Heart right ventricle (tissue), 16 donors: ENCODE measurements at regions of chr15 and their contacts with region 1.

Region 1: GRCh38 chr15:35289024-35289617 is 204.0 kb upstream of the NANOGP8 start:
- DNase-seq: peak in 1 of 2 donors; percentile 20
- ATAC-seq: peak in 4 of 8 donors; percentile 38 to 73 (median 65)
- H3K4me3 ChIP-seq: no peak overlapping the region
- H3K27ac ChIP-seq: no peak overlapping the region
- H3K4me1 ChIP-seq: peaks cover 0 to 4% (median 0%) of the 10 kb centered on the region in 9 donors
- H3K27me3 ChIP-seq: no peaks in the 10 kb centered on the region
- CTCF ChIP-seq: peak in 8 of 9 donors; percentile 28 to 83 (median 76)

Region 2: GRCh38 chr15:35061825-35062737 is 227.0 kb before region 1 on chr15:
- intact Hi-C with region 1: loop called in 1 of 10 experiments (anchors 10 kb)
- DNase-seq: no peak
- ATAC-seq: no peak
- H3K4me3 ChIP-seq: no peak overlapping the region
- H3K27ac ChIP-seq: no peak overlapping the region
- H3K4me1 ChIP-seq: no peaks in the 10 kb centered on the region
- H3K27me3 ChIP-seq: no peaks in the 10 kb centered on the region
- CTCF ChIP-seq: no peak

Region 3: DNA sequence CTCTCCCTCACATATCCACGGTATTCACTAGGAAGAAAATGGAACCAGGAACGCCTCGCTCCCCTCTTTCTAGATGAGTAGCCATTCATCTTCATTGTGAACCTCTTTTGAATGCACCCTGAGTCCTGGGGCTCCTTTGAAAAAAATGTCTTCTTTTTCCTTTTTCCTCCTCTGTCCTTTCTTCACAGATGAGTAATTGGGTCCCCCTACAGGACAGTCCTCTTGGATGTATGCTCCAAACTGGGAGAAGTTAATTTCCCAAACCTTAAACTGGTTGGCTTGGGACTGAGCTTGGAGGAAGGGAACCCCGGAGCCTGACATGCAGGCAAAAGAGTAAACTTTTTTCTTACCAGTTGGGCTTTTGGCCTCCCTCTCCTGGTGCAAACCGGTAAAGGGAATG is 148.0 kb after region 1 on chr15:
- intact Hi-C with region 1: loop called in 4 of 10 experiments (anchors 2 to 5 kb)
- DNase-seq: no peak
- ATAC-seq: no peak
- H3K4me3 ChIP-seq: no peak overlapping the region
- H3K27ac ChIP-seq: no peak overlapping the region
- H3K4me1 ChIP-seq: peaks cover 0 to 4% (median 0%) of the 10 kb centered on the region in 9 donors
- H3K27me3 ChIP-seq: no peaks in the 10 kb centered on the region
- CTCF ChIP-seq: no peak

Region 4: GRCh38 chr15:35444557-35445204 is 155.6 kb after region 1 on chr15:
- intact Hi-C with region 1: loop called in 9 of 10 experiments (anchors 1 to 5 kb)
- DNase-seq: no peak
- ATAC-seq: no peak
- H3K4me3 ChIP-seq: no peak overlapping the region
- H3K27ac ChIP-seq: no peak overlapping the region
- H3K4me1 ChIP-seq: no peaks in the 10 kb centered on the region
- H3K27me3 ChIP-seq: no peaks in the 10 kb centered on the region
- CTCF ChIP-seq: peak; percentile 48 to 84 (median 80)